ENCODE measurements at regions of chr20 and their contacts with region 1.

Region 1: GRCh38 chr20:32456869-32457478 is 98.8 kb downstream of the ASXL1 start:
- DNase-seq: no peak
- ATAC-seq: peak; percentile 50
- H3K4me3 ChIP-seq: peak overlapping the region; percentile 26 to 42
- H3K27ac ChIP-seq: no peak overlapping the region
- H3K4me1 ChIP-seq: peaks cover 13% of the 10 kb centered on the region
- H3K27me3 ChIP-seq: no peaks in the 10 kb centered on the region
- CTCF ChIP-seq: peak; percentile 94; the same call in 1 of the 2 replicates

Region 2: DNA sequence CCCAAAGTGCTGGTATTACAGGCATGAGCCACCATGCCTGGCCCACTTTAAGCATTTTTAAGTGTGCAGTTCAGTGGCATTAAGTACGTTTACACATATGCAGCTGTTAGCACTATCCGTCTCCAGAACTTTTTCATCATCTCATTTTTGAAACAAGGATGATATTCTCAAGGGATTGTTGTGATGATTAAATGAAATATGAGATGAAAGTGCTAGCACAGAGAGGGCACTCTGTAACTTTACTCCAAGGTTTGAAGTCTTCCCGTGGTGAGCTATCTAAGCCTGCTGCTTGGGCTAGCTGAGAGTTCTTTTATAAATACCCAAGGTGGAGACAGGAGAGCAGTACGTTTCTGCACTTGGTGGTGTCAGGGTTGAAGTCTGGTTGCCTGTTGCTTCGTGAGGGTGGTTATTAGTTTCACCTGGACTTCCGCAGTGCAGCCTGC is 340.9 kb before region 1 on chr20:
- CTCF ChIA-PET with region 1: no interaction called
- POLR2A ChIA-PET with region 1: interaction called, 12 read pairs
- in situ Hi-C with region 1: no loop called
- intact Hi-C with region 1: no loop called
- DNase-seq: no peak
- ATAC-seq: no peak
- H3K4me3 ChIP-seq: no peak overlapping the region
- H3K27ac ChIP-seq: no peak overlapping the region
- H3K4me1 ChIP-seq: peaks cover 36% of the 10 kb centered on the region
- H3K27me3 ChIP-seq: no peaks in the 10 kb centered on the region
- CTCF ChIP-seq: no peak

Region 3: DNA sequence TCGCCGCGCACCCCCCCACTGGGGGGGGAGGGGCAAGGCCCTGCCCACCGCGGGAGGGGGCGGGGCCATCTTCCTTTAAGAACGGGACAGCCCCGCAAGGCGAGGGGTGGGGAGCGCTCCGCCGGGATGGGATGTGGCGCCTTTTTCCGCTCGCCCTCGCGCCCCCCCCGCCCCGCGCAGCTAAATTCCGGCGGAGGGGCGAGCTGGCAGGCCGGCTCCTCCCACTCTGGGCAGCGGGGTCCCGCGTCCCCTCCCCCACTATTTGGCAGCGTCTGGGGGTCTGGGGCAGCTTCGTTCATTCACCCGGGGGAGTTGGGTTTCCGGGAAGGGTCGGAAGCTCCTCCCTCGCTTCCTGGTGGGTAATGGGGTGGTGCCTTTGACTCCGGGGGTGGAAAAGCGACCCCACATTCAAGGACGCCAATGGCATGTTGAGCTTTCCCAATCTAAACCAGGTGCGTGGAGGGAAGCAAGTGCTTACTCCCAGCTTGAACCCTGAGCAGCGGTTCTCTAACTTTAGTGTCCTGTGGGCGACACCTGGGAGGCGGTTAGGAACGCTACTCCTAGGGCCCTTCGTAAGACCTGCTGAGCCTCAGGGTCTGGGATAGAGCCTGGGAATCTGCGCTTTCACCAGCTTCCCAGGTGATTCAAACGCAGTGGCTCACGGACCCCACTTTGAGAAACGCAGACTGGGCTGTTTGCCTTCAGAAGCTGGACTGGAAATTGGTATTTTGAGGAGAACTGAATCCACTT is 97.9 kb before region 1 on chr20:
- CTCF ChIA-PET with region 1: no interaction called
- POLR2A ChIA-PET with region 1: interaction called, 10 read pairs
- in situ Hi-C with region 1: no loop called
- intact Hi-C with region 1: no loop called
- DNase-seq: no peak
- ATAC-seq: peak; percentile 61
- H3K4me3 ChIP-seq: peak overlapping the region; percentile 73 to 97
- H3K27ac ChIP-seq: peak overlapping the region; percentile 95
- H3K4me1 ChIP-seq: peaks cover 65% of the 10 kb centered on the region
- H3K27me3 ChIP-seq: no peaks in the 10 kb centered on the region
- CTCF ChIP-seq: no peak

Region 4: DNA sequence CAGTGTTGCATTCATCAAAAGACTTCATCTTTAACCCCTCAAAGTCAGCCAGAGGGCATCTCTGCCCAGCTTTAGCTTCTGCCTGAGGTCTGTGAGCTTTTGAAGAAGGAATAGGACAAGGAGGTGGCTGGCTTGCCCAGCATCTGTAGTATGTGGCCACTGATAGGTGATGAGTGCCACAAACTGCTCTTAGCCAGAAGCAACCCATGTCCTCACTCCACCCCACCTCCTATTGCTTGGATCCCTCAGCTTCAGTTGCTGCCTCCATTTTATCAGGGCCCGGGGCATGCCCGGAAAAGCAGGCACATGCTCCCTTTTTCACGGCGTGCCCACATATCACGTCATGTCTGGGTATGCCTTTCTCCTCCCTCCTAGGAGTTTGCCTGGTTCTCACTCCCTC is 389.9 kb after region 1 on chr20:
- CTCF ChIA-PET with region 1: no interaction called
- POLR2A ChIA-PET with region 1: interaction called, 13 read pairs
- in situ Hi-C with region 1: no loop called
- intact Hi-C with region 1: no loop called
- DNase-seq: no peak
- ATAC-seq: no peak
- H3K4me3 ChIP-seq: no peak overlapping the region
- H3K27ac ChIP-seq: no peak overlapping the region
- H3K4me1 ChIP-seq: no peaks in the 10 kb centered on the region
- H3K27me3 ChIP-seq: no peaks in the 10 kb centered on the region
- CTCF ChIP-seq: no peak